ENCODE measurements at regions of chr5 and their contacts with region 1.

Region 1: DNA sequence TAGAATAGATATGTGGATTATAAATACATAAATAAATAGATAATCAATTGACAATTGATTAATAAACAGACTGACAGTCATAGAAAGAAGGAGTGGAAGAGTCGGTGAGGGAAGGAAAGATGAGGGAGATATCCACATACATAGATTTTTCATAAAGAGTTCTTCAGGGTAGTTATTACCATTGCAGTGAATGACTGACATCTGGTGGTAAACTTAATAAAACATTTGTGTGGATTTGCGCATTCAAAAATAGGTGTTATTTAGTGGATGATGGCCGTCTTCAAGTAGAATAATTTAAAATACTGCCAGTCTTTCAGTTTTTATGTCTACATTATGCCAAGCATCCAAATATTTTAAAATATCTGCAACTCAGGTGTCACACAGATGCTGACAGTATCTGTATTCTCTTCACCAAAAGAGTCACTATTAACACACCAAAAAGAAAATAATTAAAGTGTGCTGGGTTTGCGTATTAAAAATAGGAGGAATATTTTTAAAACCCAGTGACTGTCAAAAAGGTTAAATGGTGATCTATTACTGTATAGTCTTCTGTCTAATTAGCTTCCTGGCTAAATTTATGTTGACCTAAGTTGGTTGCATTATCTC is 78.8 kb downstream of the GIN1 start:
- DNase-seq: peak; percentile 77
- H3K4me3 ChIP-seq: no peak overlapping the region
- H3K27ac ChIP-seq: no peak overlapping the region
- H3K4me1 ChIP-seq: peaks cover 5% of the 10 kb centered on the region
- H3K27me3 ChIP-seq: no peaks in the 10 kb centered on the region
- CTCF ChIP-seq: peak; percentile 63

Region 2: GRCh38 chr5:102583276-102584124 is 457.7 kb before region 1 on chr5:
- CTCF ChIA-PET with region 1: no interaction called
- POLR2A ChIA-PET with region 1: no interaction called
- intact Hi-C with region 1: loop called (anchors 1 kb)
- DNase-seq: peak; percentile 66
- H3K4me3 ChIP-seq: no peak overlapping the region
- H3K27ac ChIP-seq: no peak overlapping the region
- H3K4me1 ChIP-seq: peaks cover 13% of the 10 kb centered on the region
- H3K27me3 ChIP-seq: no peaks in the 10 kb centered on the region
- CTCF ChIP-seq: peak; percentile 75

Region 3: GRCh38 chr5:102778478-102778877 is 262.7 kb before region 1 on chr5:
- CTCF ChIA-PET with region 1: no interaction called
- POLR2A ChIA-PET with region 1: no interaction called
- intact Hi-C with region 1: loop called (anchors 5 kb)
- DNase-seq: no peak
- H3K4me3 ChIP-seq: no peak overlapping the region
- H3K27ac ChIP-seq: peak overlapping the region; percentile 7
- H3K4me1 ChIP-seq: peaks cover 37% of the 10 kb centered on the region
- H3K27me3 ChIP-seq: no peaks in the 10 kb centered on the region
- CTCF ChIP-seq: no peak

Region 4: DNA sequence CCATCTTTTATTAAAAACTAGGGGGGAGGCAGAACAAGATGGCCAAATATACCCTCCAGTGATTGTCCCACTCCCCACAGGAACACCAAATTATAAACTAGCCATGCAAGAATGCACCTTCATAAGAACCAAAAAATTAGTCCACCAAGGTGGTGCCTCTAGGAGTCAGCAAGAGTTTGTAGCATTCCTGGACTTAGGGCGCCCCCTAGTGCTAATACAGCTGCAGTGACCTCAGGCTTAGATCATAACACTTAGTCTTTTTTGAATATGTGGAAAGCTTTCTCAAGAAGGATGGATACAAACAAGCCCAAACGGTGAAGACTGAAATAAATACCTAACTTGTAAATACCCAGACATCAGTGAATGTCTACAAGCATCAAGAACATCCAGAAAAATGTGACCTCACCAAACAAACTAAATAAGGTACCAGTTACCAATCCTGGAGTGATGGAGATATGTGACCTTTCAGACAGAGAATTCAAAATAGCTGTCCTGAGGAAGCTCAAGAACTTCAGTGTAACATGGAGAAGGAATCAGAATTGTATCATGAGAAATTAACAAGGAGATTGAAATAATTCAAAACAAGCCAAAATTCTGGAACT is 98.2 kb after region 1 on chr5:
- CTCF ChIA-PET with region 1: no interaction called
- POLR2A ChIA-PET with region 1: no interaction called
- intact Hi-C with region 1: loop called (anchors 5 kb)
- DNase-seq: peak; percentile 82
- H3K4me3 ChIP-seq: no peak overlapping the region
- H3K27ac ChIP-seq: no peak overlapping the region
- H3K4me1 ChIP-seq: no peaks in the 10 kb centered on the region
- H3K27me3 ChIP-seq: no peaks in the 10 kb centered on the region
- CTCF ChIP-seq: peak; percentile 96

Measured in A673 (cell line).